ENCODE measurements at regions of chr3 and their contacts with region 1.

Region 1: DNA sequence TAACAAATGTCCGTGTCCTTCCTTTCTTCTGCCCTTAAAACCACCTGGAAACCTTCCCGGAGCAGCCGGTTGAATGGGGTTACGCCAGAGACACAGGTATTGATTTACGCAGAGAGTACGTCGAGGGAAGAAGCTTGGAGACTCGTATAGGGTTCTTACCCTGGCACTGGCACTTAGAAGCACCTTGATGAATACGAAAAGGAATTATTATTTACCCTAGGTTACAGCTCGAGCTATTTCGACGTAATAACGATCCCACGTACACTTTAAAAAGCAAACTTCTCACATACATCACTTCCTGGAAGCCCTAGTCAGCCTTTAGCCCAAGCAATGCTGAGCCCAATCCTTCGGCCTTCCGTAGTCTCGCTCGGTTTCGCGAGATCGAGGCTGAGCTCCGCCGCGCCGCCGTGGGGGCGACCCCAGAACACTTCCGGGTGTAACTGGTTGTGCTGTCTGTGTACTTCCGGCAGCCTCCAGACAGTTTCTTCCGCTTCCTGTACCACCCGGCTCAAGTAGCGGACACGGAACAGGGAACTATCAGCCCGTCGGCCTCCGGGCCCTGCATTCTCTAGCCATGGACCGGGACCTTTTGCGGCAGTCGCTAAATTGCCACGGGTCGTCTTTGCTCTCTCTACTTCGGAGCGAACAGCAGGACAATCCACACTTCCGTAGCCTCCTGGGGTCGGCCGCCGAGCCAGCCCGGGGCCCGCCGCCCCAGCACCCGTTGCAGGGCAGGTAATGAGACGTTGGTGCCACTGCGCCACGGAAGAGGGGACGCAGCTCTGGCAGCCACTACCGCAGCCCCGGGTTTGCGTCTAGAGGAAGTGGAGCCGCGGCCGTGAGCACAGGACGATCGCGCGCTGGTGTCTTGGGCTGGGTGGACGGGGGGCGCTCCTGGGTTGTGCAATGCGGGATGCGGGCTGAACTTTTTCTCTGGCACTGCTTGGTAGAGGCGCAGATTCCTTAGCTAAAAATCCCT is at the start of gene TTC14:
- DNase-seq: peak; percentile 86 to 97 (median 93)
- ATAC-seq: peak; percentile 86
- H3K4me3 ChIP-seq: peak within 1 kb of the TSS; percentile 93 to 97
- H3K4me3 Mint-ChIP-seq: peak within 1 kb of the TSS; percentile 97
- H3K27ac ChIP-seq: peak within 1 kb of the TSS; percentile 94 to 95
- H3K27ac Mint-ChIP-seq: peak within 1 kb of the TSS; percentile 94
- H3K4me1 ChIP-seq: peaks cover 11% of the 10 kb centered on the region
- H3K4me1 Mint-ChIP-seq: peaks cover 43% of the 10 kb centered on the region
- H3K27me3 ChIP-seq: no peaks in the 10 kb centered on the region
- H3K27me3 Mint-ChIP-seq: peaks cover 15% of the 10 kb centered on the region
- CTCF ChIP-seq: no peak
- total RNA-seq, gene TTC14: 70.2 to 84.8 TPM

Region 2: DNA sequence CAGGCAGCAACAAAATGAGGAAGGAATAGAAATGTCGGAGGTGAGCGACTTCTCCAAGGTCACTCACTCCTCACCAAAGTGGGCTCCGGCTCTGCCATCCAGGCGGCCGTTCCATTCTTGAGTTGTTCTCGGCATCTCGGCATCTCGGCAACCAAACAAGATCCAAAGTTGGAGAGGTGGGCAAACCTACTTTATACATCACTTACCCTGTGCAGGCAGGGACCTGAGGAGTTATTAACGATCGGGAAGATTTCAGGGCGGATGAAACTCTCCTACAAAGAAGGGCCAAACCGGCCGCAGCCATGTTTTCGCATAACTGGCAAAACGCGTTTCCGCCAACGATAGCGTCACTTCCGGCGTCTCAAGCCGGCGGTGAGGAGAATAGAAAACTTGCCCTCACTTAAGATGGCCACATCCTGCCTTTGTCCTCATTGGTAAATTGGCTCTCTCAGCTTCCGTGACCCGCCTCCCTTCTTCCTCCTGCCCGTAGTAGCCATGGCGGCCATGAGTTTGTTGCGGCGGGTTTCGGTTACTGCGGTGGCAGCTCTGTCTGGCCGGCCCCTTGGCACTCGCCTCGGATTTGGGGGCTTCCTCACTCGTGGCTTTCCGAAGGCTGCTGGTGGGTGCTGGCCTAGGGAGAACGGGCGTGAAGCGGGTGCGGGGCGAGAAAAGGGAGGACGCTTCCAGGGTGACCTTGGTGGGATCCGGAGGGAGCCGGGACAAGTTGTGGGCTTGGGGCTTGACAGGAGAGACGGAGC is 997.5 kb before region 1 on chr3 and contains the starts of genes MRPL47 and NDUFB5:
- CTCF ChIA-PET with region 1: no interaction called
- POLR2A ChIA-PET with region 1: no interaction called
- intact Hi-C with region 1: loop called (anchors 1 kb)
- DNase-seq: peak; percentile 81 to 98 (median 93)
- ATAC-seq: peak; percentile 99
- H3K4me3 ChIP-seq: peak within 1 kb of the TSS; percentile 82 to 96
- H3K4me3 Mint-ChIP-seq: peak within 1 kb of the TSS; percentile 97
- H3K27ac ChIP-seq: peak within 1 kb of the TSS; percentile 93 to 98
- H3K27ac Mint-ChIP-seq: peak within 1 kb of the TSS; percentile 100
- H3K4me1 ChIP-seq: peaks cover 13% of the 10 kb centered on the region
- H3K4me1 Mint-ChIP-seq: peaks cover 55% of the 10 kb centered on the region
- H3K27me3 ChIP-seq: no peaks in the 10 kb centered on the region
- H3K27me3 Mint-ChIP-seq: no peaks in the 10 kb centered on the region
- CTCF ChIP-seq: no peak
- total RNA-seq, gene MRPL47: 36.4 to 37.8 TPM
- total RNA-seq, gene NDUFB5: 21.0 to 25.6 TPM

Region 3: GRCh38 chr3:179653096-179653797 is 948.7 kb before region 1 on chr3:
- CTCF ChIA-PET with region 1: no interaction called
- POLR2A ChIA-PET with region 1: interaction called, 3 read pairs
- intact Hi-C with region 1: loop called in 1 of 2 experiments (anchors 5 kb)
- DNase-seq: peak; percentile 15 to 79 (median 64)
- ATAC-seq: peak; percentile 62
- H3K4me3 ChIP-seq: peak overlapping the region; percentile 78 to 93
- H3K4me3 Mint-ChIP-seq: peak overlapping the region; percentile 92
- H3K27ac ChIP-seq: peak overlapping the region; percentile 67 to 69
- H3K27ac Mint-ChIP-seq: peak overlapping the region; percentile 90
- H3K4me1 ChIP-seq: peaks cover 6% of the 10 kb centered on the region
- H3K4me1 Mint-ChIP-seq: peaks cover 31% of the 10 kb centered on the region
- H3K27me3 ChIP-seq: no peaks in the 10 kb centered on the region
- H3K27me3 Mint-ChIP-seq: no peaks in the 10 kb centered on the region
- CTCF ChIP-seq: no peak

Region 4: GRCh38 chr3:180615954-180616353 is 14.0 kb after region 1 on chr3:
- CTCF ChIA-PET with region 1: no interaction called
- POLR2A ChIA-PET with region 1: interaction called, 14 read pairs
- intact Hi-C with region 1: loop called in 1 of 2 experiments (anchors 2 kb)
- DNase-seq: no peak
- ATAC-seq: no peak
- H3K4me3 ChIP-seq: no peak overlapping the region
- H3K4me3 Mint-ChIP-seq: no peak overlapping the region
- H3K27ac ChIP-seq: no peak overlapping the region
- H3K27ac Mint-ChIP-seq: peak overlapping the region; percentile 28
- H3K4me1 ChIP-seq: no peaks in the 10 kb centered on the region
- H3K4me1 Mint-ChIP-seq: no peaks in the 10 kb centered on the region
- H3K27me3 ChIP-seq: no peaks in the 10 kb centered on the region
- H3K27me3 Mint-ChIP-seq: no peaks in the 10 kb centered on the region
- CTCF ChIP-seq: no peak

Region 5: GRCh38 chr3:180679178-180680096 is 77.5 kb after region 1 on chr3 and contains the start of gene CCDC39:
- CTCF ChIA-PET with region 1: no interaction called
- POLR2A ChIA-PET with region 1: interaction called, 5 read pairs
- intact Hi-C with region 1: loop called in 1 of 2 experiments (anchors 5 kb)
- DNase-seq: peak; percentile 10 to 79 (median 57)
- ATAC-seq: peak; percentile 78
- H3K4me3 ChIP-seq: peak within 1 kb of the TSS; percentile 34 to 45
- H3K4me3 Mint-ChIP-seq: peak within 1 kb of the TSS; percentile 84
- H3K27ac ChIP-seq: peak within 1 kb of the TSS in 1 of 2 experiments; percentile 12
- H3K27ac Mint-ChIP-seq: peak within 1 kb of the TSS; percentile 16
- H3K4me1 ChIP-seq: peaks cover 10% of the 10 kb centered on the region
- H3K4me1 Mint-ChIP-seq: peaks cover 22% of the 10 kb centered on the region
- H3K27me3 ChIP-seq: peaks cover 0 to 12% of the 10 kb centered on the region in 2 experiments
- H3K27me3 Mint-ChIP-seq: peaks cover 46% of the 10 kb centered on the region
- CTCF ChIP-seq: no peak
- total RNA-seq, gene CCDC39: not detected

Region 6: GRCh38 chr3:180989291-180990163 is 387.6 kb after region 1 on chr3 and contains the start of gene DNAJC19:
- CTCF ChIA-PET with region 1: no interaction called
- POLR2A ChIA-PET with region 1: interaction called, 5 read pairs
- intact Hi-C with region 1: loop called (anchors 1 to 2 kb)
- DNase-seq: peak; percentile 82 to 97 (median 90)
- ATAC-seq: peak; percentile 95
- H3K4me3 ChIP-seq: peak within 1 kb of the TSS; percentile 74 to 93
- H3K4me3 Mint-ChIP-seq: peak within 1 kb of the TSS; percentile 97
- H3K27ac ChIP-seq: peak within 1 kb of the TSS; percentile 74
- H3K27ac Mint-ChIP-seq: peak within 1 kb of the TSS; percentile 97
- H3K4me1 ChIP-seq: peaks cover 11% of the 10 kb centered on the region
- H3K4me1 Mint-ChIP-seq: peaks cover 51% of the 10 kb centered on the region
- H3K27me3 ChIP-seq: no peaks in the 10 kb centered on the region
- H3K27me3 Mint-ChIP-seq: peaks cover 3% of the 10 kb centered on the region
- CTCF ChIP-seq: no peak
- total RNA-seq, gene DNAJC19: 35.5 to 42.3 TPM

Measured in CD8-positive, alpha-beta T cell (primary cell).